Activated CD4-positive, alpha-beta T cell treated with anti-CD3 and anti-CD28 coated beads, Interleukin-2, amount 10 ng/mL, durations not matched to agents 24 days and 14 days (primary cell): ENCODE measurements at regions of chr1 and their contacts with region 1.

Region 1: DNA sequence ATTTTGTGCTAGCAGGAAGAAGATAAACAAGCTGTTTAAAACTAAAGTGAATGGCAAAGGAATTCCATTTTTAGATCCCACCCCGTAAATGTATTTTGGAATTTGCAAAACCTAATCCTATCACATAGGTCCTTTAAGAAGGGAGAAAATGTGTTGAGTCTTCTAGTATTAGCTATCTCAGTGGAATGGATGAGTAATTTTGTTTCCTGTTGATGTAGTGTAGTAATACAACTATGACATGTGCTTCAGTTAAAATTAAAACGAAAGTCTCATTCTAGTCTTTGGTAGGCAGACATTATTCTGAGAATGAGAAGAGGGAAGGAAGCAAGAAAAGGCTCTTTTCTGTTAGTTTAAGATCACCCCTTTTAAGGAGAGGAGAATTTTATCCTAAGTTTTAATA is 265.9 kb upstream of the C1orf105 start:
- DNase-seq: no peak
- H3K4me3 Mint-ChIP-seq: peak overlapping the region; percentile 66
- H3K27ac Mint-ChIP-seq: peak overlapping the region; percentile 95
- H3K4me1 Mint-ChIP-seq: peaks cover 9% of the 10 kb centered on the region
- H3K27me3 Mint-ChIP-seq: no peaks in the 10 kb centered on the region

Region 2: DNA sequence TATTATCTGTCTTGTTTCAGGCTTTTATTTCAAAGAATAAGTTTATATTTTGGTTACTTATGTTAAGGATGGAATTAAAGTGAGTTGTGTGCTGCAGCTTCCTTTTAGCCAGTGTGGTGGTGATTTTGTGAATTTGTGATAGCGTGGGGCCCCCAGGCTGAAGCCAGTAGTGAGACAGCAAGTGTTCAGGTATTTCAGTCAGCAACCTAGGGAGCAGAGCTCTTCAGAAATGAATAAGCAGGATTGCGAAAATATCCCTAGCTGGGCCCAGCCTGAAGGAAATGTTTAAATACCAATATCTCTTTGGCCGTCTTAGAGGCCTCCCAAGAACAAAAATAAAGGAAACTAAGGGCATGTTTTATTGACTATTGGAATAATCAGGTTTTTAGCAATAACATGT is 115.1 kb after region 1 on chr1:
- intact Hi-C with region 1: loop called (anchors 5 kb)
- DNase-seq: no peak
- H3K4me3 Mint-ChIP-seq: peak overlapping the region; percentile 29
- H3K27ac Mint-ChIP-seq: peak overlapping the region; percentile 88
- H3K4me1 Mint-ChIP-seq: peaks cover 44% of the 10 kb centered on the region
- H3K27me3 Mint-ChIP-seq: no peaks in the 10 kb centered on the region